Left lung (tissue), 14 donors: ENCODE measurements at regions of chr13 and their contacts with region 1.

Region 1: DNA sequence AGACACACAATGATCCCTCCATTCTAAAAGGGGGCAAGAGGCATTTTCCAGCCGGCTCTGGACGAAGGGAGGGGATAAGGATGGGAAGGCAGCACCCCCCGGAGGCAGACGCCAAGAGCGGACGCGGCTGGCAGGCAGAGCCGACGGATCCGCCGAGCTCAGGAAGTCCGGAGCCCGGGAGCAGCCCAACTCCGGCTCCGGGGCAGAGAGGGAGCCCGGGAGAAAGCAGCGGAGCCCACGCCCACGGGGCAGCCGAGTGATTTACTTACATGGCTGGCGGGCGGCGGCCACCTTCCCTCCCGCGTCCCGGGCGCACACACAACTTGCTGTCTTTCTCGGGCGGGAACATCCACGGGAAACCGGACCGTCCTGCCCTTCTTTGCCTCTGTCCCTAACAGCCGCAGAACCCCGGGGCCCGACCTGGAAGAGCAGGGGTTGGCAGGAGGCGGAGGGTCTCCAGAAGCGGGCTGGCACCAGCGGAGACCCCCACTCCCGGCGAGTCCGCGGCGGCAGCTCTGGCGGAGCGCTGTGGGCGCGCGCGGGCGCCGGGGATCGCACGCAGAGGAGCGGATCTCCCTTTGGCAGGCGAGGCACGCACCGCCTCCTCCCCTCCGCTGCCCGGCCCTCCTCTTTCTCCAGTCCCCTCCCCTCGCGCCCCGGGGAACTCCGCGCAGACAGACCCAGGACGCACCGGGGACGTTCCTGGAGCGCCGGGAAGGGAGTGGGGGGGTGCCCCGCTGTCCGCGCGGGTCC is at the start of gene LHFPL6:
- DNase-seq: peak; percentile 80 to 92 (median 88)
- ATAC-seq: peak; percentile 99
- H3K4me3 ChIP-seq: peak within 1 kb of the TSS; percentile 72 to 83
- H3K27ac ChIP-seq: peak within 1 kb of the TSS; percentile 87 to 88
- H3K4me1 ChIP-seq: peaks cover 5 to 38% of the 10 kb centered on the region in 2 donors
- H3K27me3 ChIP-seq: peaks cover 0 to 32% of the 10 kb centered on the region in 2 donors
- CTCF ChIP-seq: no peak
- polyA plus RNA-seq, gene LHFPL6: 67.5 to 113 (median 91.8) TPM

Region 2: GRCh38 chr13:39144941-39145533 is 457.8 kb before region 1 on chr13:
- intact Hi-C with region 1: loop called in 1 of 2 experiments (anchors 10 kb)
- DNase-seq: peak in 2 of 4 donors; percentile 67 to 83
- ATAC-seq: peak; percentile 64
- H3K4me3 ChIP-seq: no peak overlapping the region
- H3K27ac ChIP-seq: no peak overlapping the region
- H3K4me1 ChIP-seq: peaks cover 0 to 4% of the 10 kb centered on the region in 2 donors
- H3K27me3 ChIP-seq: no peaks in the 10 kb centered on the region
- CTCF ChIP-seq: peak; percentile 55 to 71

Region 3: DNA sequence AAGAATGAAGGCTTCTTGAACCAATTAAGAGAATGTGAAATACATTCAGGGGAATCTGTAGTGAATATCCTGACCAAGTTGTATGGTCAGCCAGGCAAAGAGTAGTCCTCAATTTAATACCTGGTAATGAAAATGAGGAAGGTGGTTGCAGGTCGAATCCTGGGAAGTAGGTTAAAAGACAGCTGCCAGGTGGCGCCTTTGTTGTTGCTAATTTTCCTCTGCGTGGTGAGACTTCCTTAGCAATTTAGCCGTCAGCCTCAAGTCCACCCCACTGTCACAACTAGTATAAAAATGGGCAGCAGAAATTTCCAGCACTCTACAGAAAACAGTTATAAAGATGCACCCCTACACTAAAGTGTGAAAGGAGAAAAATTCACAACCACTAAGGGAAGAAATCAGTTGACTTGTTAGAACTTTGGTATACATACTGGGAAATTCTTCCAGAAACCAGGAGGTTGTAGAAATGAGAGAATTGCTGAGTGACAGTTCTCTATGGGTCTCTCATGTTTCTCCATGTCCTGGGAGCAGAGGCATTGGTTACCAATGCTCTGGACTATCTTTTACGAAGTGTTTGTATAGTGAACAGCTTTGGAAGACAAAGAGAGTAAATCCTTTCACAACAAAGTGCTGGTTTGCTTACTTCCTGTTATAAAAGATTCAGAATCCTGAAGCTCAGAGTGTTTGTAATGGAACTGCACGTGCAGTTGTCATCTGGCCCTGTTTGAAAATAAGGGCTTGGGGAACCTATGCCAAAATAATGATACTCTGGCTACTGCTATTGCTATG is 328.6 kb before region 1 on chr13:
- intact Hi-C with region 1: loop called in 1 of 2 experiments (anchors 10 kb)
- DNase-seq: no peak
- ATAC-seq: peak; percentile 69
- H3K4me3 ChIP-seq: no peak overlapping the region
- H3K27ac ChIP-seq: no peak overlapping the region
- H3K4me1 ChIP-seq: no peaks in the 10 kb centered on the region
- H3K27me3 ChIP-seq: no peaks in the 10 kb centered on the region
- CTCF ChIP-seq: no peak